ENCODE measurements at regions of chr19 and their contacts with region 1.

Region 1: GRCh38 chr19:57578487-57579205 is at the start of gene ZNF416:
- DNase-seq: peak; percentile 97
- H3K4me3 Mint-ChIP-seq: peak within 1 kb of the TSS; percentile 76
- H3K27ac Mint-ChIP-seq: peak within 1 kb of the TSS; percentile 75
- H3K4me1 Mint-ChIP-seq: peaks cover 18% of the 10 kb centered on the region
- H3K27me3 Mint-ChIP-seq: no peaks in the 10 kb centered on the region
- total RNA-seq, gene ZNF416: 2.2 to 2.4 TPM

Region 2: GRCh38 chr19:57389730-57390598 is 188.7 kb before region 1 on chr19 and contains the start of gene ZNF548:
- CTCF ChIA-PET with region 1: no interaction called
- POLR2A ChIA-PET with region 1: no interaction called
- intact Hi-C with region 1: loop called (anchors 1 kb)
- DNase-seq: peak; percentile 97
- H3K4me3 Mint-ChIP-seq: peak within 1 kb of the TSS; percentile 96
- H3K27ac Mint-ChIP-seq: peak within 1 kb of the TSS; percentile 94
- H3K4me1 Mint-ChIP-seq: peaks cover 25% of the 10 kb centered on the region
- H3K27me3 Mint-ChIP-seq: no peaks in the 10 kb centered on the region
- total RNA-seq, gene ZNF548: 12.0 to 12.1 TPM

Region 3: GRCh38 chr19:57537953-57538547 is 40.6 kb before region 1 on chr19:
- CTCF ChIA-PET with region 1: no interaction called
- POLR2A ChIA-PET with region 1: no interaction called
- intact Hi-C with region 1: no loop called
- DNase-seq: no peak
- H3K4me3 Mint-ChIP-seq: no peak overlapping the region
- H3K27ac Mint-ChIP-seq: no peak overlapping the region
- H3K4me1 Mint-ChIP-seq: no peaks in the 10 kb centered on the region
- H3K27me3 Mint-ChIP-seq: no peaks in the 10 kb centered on the region

Region 4: GRCh38 chr19:57566396-57567265 is 12.0 kb before region 1 on chr19:
- CTCF ChIA-PET with region 1: no interaction called
- POLR2A ChIA-PET with region 1: no interaction called
- intact Hi-C with region 1: no loop called
- DNase-seq: no peak
- H3K4me3 Mint-ChIP-seq: no peak overlapping the region
- H3K27ac Mint-ChIP-seq: no peak overlapping the region
- H3K4me1 Mint-ChIP-seq: no peaks in the 10 kb centered on the region
- H3K27me3 Mint-ChIP-seq: peaks cover 3% of the 10 kb centered on the region

Region 5: DNA sequence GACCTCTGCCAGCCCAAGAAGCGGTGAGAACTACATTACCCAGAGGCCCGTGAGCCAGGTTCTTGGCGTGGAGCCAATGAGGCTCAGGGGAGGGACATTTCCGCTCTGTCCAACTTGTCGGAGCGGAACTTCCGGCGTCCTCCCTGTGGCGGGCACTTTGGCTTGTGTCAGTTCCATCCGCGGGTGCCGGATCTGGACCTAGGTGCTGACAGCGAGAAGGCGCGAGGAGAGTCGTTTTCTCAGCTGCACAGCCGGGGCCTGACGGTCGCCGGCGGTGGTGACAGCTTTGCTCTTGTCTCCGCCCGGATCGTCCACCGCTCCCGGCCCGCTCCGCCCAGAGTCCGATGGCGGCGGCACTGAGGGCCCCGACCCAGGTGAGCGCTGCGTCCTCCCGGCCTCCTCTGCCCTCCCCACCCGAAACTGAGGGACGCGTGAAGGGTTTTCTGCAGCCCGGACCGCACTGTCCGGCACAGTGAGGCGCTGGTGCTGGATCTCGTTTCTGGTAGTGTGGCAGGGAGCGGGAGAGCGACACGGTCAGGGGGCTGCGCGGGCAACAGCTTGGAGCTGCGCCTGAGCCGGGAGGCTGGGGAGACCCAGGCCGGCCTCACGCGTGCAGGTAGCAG is 21.2 kb after region 1 on chr19 and contains the start of gene ZNF530:
- CTCF ChIA-PET with region 1: no interaction called
- POLR2A ChIA-PET with region 1: no interaction called
- intact Hi-C with region 1: loop called (anchors 1 kb)
- DNase-seq: peak; percentile 93
- H3K4me3 Mint-ChIP-seq: peak within 1 kb of the TSS; percentile 81
- H3K27ac Mint-ChIP-seq: no peak within 1 kb of the TSS
- H3K4me1 Mint-ChIP-seq: peaks cover 21% of the 10 kb centered on the region
- H3K27me3 Mint-ChIP-seq: no peaks in the 10 kb centered on the region
- total RNA-seq, gene ZNF530: 3.7 to 5.6 TPM

Region 6: GRCh38 chr19:57632987-57633831 is 54.6 kb after region 1 on chr19 and contains the start of gene ZNF211:
- CTCF ChIA-PET with region 1: no interaction called
- POLR2A ChIA-PET with region 1: no interaction called
- intact Hi-C with region 1: loop called (anchors 5 kb)
- DNase-seq: peak; percentile 92
- H3K4me3 Mint-ChIP-seq: peak within 1 kb of the TSS; percentile 84
- H3K27ac Mint-ChIP-seq: peak within 1 kb of the TSS; percentile 67
- H3K4me1 Mint-ChIP-seq: peaks cover 20% of the 10 kb centered on the region
- H3K27me3 Mint-ChIP-seq: no peaks in the 10 kb centered on the region
- total RNA-seq, gene ZNF211: 8.2 to 8.3 TPM

Region 7: DNA sequence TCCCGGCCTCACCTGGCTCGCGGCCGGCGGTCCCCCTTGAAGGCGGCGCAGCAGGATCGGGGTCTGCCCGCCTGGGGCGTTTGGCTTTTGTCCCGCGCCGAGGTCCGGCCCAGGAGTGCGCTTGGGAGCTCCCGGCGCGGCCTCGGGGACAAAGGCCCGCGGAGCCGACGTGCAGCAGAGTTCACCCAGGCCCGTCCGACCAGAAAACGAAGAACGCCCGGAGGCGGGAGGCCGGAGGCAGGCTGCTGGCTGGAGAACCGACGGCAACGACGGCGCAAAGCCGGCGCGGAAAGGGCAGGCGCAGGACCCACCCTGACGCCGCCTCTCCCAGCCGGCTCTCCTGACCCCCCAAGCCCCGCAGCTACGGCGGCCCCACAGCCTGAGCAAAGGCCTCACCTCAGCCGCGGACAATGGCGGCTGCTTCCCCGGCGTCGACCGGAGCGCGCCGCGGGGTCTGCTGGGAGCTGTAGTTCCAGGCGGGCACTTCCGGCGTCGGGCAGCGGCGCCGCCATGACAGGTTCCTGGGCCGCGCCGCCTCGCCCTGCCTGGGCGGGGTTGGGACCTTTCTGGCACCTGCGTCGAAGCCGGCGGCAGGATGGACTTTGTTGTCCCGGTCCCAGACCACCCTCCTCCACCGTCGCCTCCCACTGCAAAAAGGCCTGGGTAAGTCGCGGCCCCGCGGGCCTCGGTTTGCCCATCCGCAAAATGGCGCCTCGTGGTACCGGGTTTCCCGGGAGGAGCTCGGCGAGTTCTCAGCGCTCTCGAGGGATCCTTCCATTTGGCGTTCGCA is 423.9 kb after region 1 on chr19 and contains the start of gene ZNF606:
- CTCF ChIA-PET with region 1: no interaction called
- POLR2A ChIA-PET with region 1: no interaction called
- intact Hi-C with region 1: loop called (anchors 2 kb)
- DNase-seq: peak; percentile 88
- H3K4me3 Mint-ChIP-seq: peak within 1 kb of the TSS; percentile 78
- H3K27ac Mint-ChIP-seq: peak within 1 kb of the TSS; percentile 56
- H3K4me1 Mint-ChIP-seq: peaks cover 26% of the 10 kb centered on the region
- H3K27me3 Mint-ChIP-seq: no peaks in the 10 kb centered on the region
- total RNA-seq, gene ZNF606: 5.1 to 5.8 TPM

Measured in activated CD4-positive, alpha-beta memory T cell treated with anti-CD3 and anti-CD28 coated beads for 36 hours (primary cell).